ENCODE measurements at regions of chr14 and their contacts with region 1.

Region 1: DNA sequence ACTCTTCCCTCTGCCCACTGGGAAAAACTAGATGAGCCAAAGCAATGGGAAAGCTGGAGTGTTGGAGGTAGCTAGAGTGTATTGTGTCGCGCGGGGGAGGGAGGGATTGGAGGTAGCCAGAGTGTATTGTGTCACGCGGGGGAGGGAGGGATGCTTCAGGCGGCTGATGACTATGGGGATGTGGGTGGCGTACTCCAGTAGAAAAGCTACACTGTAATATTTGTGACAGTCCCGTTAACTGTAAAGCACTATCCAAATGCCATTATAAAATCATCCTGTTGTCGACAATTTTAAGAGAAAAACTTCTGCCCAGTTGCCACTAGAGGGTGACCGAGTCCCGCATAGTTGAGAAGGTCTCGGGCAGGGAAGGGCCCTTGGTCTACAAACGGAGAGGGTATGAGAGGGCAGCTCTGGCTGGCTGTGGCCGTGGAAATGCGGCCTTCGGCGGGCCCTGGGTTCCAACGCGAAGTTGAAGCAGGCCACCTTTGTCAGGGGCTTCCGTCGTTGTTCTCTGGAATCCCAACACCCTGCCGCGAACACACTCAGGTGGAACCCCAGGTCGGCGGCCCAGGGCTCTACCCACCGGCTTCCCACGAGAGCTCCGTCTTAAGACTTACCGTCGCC is 15.1 kb upstream of the PLEK2 start:
- DNase-seq: peak; percentile 79
- ATAC-seq: peak; percentile 97
- H3K4me3 Mint-ChIP-seq: no peak overlapping the region
- H3K27ac Mint-ChIP-seq: no peak overlapping the region
- H3K4me1 Mint-ChIP-seq: no peaks in the 10 kb centered on the region
- H3K27me3 Mint-ChIP-seq: peaks cover 20% of the 10 kb centered on the region
- CTCF ChIP-seq: peak; percentile 75

Region 2: GRCh38 chr14:67331368-67332125 is 95.5 kb before region 1 on chr14:
- CTCF ChIA-PET with region 1: no interaction called
- POLR2A ChIA-PET with region 1: no interaction called
- intact Hi-C with region 1: no loop called
- DNase-seq: no peak
- ATAC-seq: no peak
- H3K4me3 Mint-ChIP-seq: no peak overlapping the region
- H3K27ac Mint-ChIP-seq: no peak overlapping the region
- H3K4me1 Mint-ChIP-seq: no peaks in the 10 kb centered on the region
- H3K27me3 Mint-ChIP-seq: no peaks in the 10 kb centered on the region
- CTCF ChIP-seq: no peak

Region 3: GRCh38 chr14:67387195-67387594 is 39.9 kb before region 1 on chr14:
- CTCF ChIA-PET with region 1: interaction called, 12 read pairs
- POLR2A ChIA-PET with region 1: no interaction called
- intact Hi-C with region 1: no loop called
- DNase-seq: no peak
- ATAC-seq: no peak
- H3K4me3 Mint-ChIP-seq: no peak overlapping the region
- H3K27ac Mint-ChIP-seq: no peak overlapping the region
- H3K4me1 Mint-ChIP-seq: no peaks in the 10 kb centered on the region
- H3K27me3 Mint-ChIP-seq: no peaks in the 10 kb centered on the region
- CTCF ChIP-seq: no peak

Region 4: DNA sequence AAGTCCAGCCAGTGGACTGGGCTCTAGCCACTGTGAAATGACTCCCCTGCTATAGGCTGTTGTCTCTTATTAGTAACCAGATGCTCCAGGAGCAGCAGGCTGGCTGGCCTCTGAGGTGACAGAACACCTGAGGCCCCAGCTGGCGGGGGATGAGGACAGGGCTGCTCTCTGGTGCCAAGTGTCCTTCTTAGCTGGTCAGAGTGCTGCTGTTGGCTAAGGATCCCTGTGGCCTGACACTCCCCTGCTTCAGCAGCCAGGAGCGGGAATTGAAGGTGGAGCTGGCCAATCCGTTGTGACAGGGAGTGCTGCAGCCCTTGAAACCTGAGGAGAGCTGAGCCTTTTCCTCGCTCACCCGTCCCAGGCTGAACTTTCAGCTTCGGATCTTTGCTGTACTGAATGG is 30.7 kb after region 1 on chr14:
- CTCF ChIA-PET with region 1: interaction called, 15 read pairs
- POLR2A ChIA-PET with region 1: no interaction called
- intact Hi-C with region 1: no loop called
- DNase-seq: no peak
- ATAC-seq: no peak
- H3K4me3 Mint-ChIP-seq: no peak overlapping the region
- H3K27ac Mint-ChIP-seq: no peak overlapping the region
- H3K4me1 Mint-ChIP-seq: no peaks in the 10 kb centered on the region
- H3K27me3 Mint-ChIP-seq: no peaks in the 10 kb centered on the region
- CTCF ChIP-seq: no peak

Region 5: DNA sequence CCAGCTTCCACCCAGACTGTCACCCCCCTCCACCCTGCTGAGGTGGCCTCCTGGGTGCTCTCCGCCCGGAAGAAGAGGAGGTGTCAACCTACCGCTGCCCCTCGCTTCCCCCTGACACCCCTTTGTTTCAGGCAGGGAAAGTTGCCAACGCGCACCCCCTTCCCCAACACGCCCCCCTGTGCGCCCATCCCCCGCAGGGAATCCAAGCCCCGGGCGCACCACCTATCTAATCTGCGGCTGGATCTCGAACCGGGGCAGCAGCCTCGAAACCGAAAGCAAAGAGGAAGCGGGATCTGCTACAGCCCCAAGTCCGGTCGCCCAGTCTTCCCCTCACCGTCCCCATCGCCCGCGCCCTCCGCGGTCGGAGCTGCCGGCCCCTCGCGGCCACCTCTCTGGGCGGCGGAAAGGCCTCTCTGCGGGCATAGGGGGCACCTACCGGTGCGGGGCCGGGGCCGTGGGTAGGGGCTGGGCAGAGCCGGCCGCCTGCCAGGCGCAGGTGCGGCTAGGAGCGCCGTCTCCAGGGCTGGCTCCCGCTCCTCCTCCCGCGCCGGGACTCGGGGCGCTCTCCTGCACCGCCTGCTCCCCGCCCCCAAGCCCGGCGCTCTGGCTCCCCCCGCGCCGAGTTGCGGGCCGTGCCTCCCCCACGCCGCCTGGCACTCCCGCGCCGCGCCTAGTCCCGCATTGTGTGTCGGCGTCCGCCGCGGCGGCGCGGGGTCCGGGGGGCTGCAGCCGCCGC is 87.7 kb after region 1 on chr14:
- CTCF ChIA-PET with region 1: interaction called, 26 read pairs
- POLR2A ChIA-PET with region 1: no interaction called
- intact Hi-C with region 1: no loop called
- DNase-seq: peak; percentile 43
- ATAC-seq: peak; percentile 63
- H3K4me3 Mint-ChIP-seq: peak overlapping the region; percentile 78
- H3K27ac Mint-ChIP-seq: peak overlapping the region; percentile 74
- H3K4me1 Mint-ChIP-seq: peaks cover 32% of the 10 kb centered on the region
- H3K27me3 Mint-ChIP-seq: peaks cover 2% of the 10 kb centered on the region
- CTCF ChIP-seq: no peak

Region 6: GRCh38 chr14:67549734-67550133 is 122.6 kb after region 1 on chr14:
- CTCF ChIA-PET with region 1: interaction called, 14 read pairs
- POLR2A ChIA-PET with region 1: no interaction called
- intact Hi-C with region 1: no loop called
- DNase-seq: no peak
- ATAC-seq: no peak
- H3K4me3 Mint-ChIP-seq: no peak overlapping the region
- H3K27ac Mint-ChIP-seq: no peak overlapping the region
- H3K4me1 Mint-ChIP-seq: no peaks in the 10 kb centered on the region
- H3K27me3 Mint-ChIP-seq: no peaks in the 10 kb centered on the region
- CTCF ChIP-seq: no peak

Region 7: DNA sequence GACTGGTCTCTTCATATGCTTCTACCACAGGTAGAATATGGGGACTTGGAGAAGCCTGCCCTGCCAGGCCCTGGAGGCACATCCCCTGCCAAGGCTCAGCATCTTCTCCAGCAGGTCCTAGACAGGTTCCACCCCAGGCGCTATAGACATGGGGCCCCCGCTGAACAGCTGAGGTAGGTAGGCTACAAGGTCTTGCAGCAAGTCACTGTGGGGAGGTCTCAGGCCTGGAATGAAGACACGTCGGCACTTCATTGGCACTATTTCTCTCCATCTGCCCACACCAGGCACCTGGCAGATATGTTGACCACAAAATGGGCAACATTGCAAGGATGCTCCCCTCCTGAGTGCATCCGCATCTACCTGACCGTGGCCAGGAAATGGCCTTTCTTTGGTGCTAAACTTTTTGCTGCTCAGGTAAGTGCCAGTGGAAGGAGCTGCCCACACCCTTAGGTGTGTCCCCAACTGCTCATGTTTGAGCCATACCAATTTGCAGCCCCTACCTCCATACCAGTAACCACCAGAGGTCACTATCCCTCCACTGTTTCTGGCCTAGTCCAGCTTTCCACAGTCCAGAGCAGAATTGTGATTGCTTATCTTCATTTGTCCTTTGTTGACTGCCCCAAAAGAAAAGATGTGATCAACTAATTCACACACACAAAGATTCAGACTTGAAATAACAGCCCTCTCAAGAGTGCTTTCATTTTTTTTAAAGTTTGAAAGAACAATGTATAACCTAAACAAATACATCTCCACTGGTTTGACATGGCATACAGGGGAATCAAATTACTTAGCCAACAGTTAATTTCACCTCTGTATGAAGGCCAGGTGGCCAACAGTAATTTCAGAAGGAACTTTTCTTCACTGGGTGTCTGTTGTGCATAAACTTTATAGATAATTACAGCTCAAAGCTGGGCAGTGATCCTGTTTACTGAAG is 156.9 kb after region 1 on chr14:
- CTCF ChIA-PET with region 1: interaction called, 20 read pairs
- POLR2A ChIA-PET with region 1: no interaction called
- intact Hi-C with region 1: no loop called
- DNase-seq: peak; percentile 39
- ATAC-seq: peak; percentile 80
- H3K4me3 Mint-ChIP-seq: no peak overlapping the region
- H3K27ac Mint-ChIP-seq: no peak overlapping the region
- H3K4me1 Mint-ChIP-seq: no peaks in the 10 kb centered on the region
- H3K27me3 Mint-ChIP-seq: no peaks in the 10 kb centered on the region
- CTCF ChIP-seq: peak; percentile 51